ENCODE measurements at regions of chr1 and their contacts with region 1.

Region 1: GRCh38 chr1:160768295-160768657 is 27.7 kb upstream of the LY9 start:
- DNase-seq: peak; percentile 87
- ATAC-seq: peak; percentile 98
- H3K4me3 ChIP-seq: peak overlapping the region in 4 of 5 experiments; percentile 20 to 64 (median 43)
- H3K4me3 Mint-ChIP-seq: peak overlapping the region; percentile 83
- H3K27ac ChIP-seq: peak overlapping the region; percentile 39 to 68
- H3K27ac Mint-ChIP-seq: peak overlapping the region; percentile 85
- H3K4me1 ChIP-seq: peaks cover 11 to 18% of the 10 kb centered on the region in 2 donors
- H3K4me1 Mint-ChIP-seq: peaks cover 29% of the 10 kb centered on the region
- H3K27me3 ChIP-seq: no peaks in the 10 kb centered on the region
- H3K27me3 Mint-ChIP-seq: no peaks in the 10 kb centered on the region
- CTCF ChIP-seq: peak; percentile 74

Region 2: DNA sequence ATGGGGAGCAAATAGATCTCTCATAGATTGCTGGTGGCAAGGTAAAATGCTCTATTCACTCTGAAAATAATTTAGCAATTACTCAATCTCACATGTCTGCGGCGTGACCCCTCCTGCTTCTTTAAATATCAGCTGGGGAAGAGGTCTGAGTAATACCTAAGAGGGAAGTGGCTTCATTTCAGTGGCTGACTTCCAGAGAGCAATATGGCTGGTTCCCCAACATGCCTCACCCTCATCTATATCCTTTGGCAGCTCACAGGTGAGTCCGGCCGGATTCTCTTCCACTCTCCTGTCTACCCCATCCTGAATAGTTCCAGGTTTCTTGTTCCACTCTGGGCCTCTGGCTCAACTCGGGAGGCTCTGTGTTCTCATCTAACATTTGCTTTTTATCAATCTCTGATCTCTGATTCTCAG is 29.2 kb before region 1 on chr1 and contains the start of gene SLAMF7:
- CTCF ChIA-PET with region 1: interaction called, 11 read pairs
- POLR2A ChIA-PET with region 1: no interaction called
- intact Hi-C with region 1: no loop called
- DNase-seq: peak; percentile 75
- ATAC-seq: peak; percentile 92
- H3K4me3 ChIP-seq: peak within 1 kb of the TSS in 4 of 5 experiments; percentile 9 to 50 (median 31)
- H3K4me3 Mint-ChIP-seq: peak within 1 kb of the TSS; percentile 91
- H3K27ac ChIP-seq: peak within 1 kb of the TSS; percentile 41 to 70
- H3K27ac Mint-ChIP-seq: peak within 1 kb of the TSS; percentile 87
- H3K4me1 ChIP-seq: peaks cover 25 to 39% of the 10 kb centered on the region in 2 donors
- H3K4me1 Mint-ChIP-seq: peaks cover 61% of the 10 kb centered on the region
- H3K27me3 ChIP-seq: no peaks in the 10 kb centered on the region
- H3K27me3 Mint-ChIP-seq: no peaks in the 10 kb centered on the region
- CTCF ChIP-seq: no peak
- total RNA-seq, gene SLAMF7: 51.6 and 52.6 TPM in 2 replicates

Region 3: GRCh38 chr1:160795951-160796383 is 27.7 kb after region 1 on chr1 and contains the start of gene LY9:
- CTCF ChIA-PET with region 1: interaction called, 150 read pairs
- POLR2A ChIA-PET with region 1: interaction called, 3 read pairs
- intact Hi-C with region 1: loop called (anchors 2 kb)
- DNase-seq: peak; percentile 96
- ATAC-seq: peak; percentile 93
- H3K4me3 ChIP-seq: peak within 1 kb of the TSS; percentile 41 to 87 (median 63)
- H3K4me3 Mint-ChIP-seq: peak within 1 kb of the TSS; percentile 99
- H3K27ac ChIP-seq: peak within 1 kb of the TSS; percentile 95 to 98
- H3K27ac Mint-ChIP-seq: peak within 1 kb of the TSS; percentile 98
- H3K4me1 ChIP-seq: peaks cover 62 to 68% of the 10 kb centered on the region in 2 donors
- H3K4me1 Mint-ChIP-seq: peaks cover 68% of the 10 kb centered on the region
- H3K27me3 ChIP-seq: no peaks in the 10 kb centered on the region
- H3K27me3 Mint-ChIP-seq: no peaks in the 10 kb centered on the region
- CTCF ChIP-seq: no peak
- total RNA-seq, gene LY9: 365 and 367 TPM in 2 replicates

Region 4: DNA sequence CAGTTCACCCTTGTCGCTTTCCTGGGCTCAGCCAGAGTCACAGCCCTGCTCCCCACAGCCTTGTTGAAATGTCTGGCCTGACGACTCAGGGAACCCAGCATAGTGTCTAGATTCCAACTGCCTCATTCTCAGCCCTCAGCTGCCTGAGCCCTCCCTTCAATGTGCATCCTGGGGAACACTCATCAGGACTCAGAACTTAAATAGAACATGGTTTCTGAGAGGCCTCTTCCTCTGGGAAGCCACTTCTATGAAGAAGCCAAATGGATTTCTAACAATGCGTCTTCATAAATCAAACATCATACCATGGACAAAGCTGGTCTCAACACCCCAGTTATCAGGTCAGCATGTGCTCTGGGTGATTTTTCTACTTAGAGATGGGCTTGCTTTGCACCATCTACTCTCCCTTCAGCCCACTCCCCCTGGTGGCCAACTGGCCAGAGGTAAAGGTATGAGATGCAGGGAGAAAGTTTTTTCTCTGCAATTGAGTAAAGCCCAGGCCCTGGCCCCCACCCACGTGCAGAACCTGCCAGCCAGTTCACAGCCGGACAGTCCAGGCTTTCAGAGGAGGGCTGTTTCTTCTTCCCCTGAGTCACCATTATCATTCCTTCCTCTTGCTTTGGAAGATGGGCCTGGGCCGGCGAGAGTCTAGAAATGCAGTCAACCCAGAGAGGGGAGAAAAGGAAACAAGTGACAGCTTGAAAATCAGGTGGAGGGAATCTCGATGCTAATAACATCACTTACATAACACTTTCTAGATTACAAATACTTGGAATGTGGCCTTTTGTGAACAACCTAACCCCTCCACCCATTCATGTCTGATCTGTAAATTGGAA is 62.3 kb after region 1 on chr1:
- CTCF ChIA-PET with region 1: interaction called, 20 read pairs
- POLR2A ChIA-PET with region 1: no interaction called
- intact Hi-C with region 1: no loop called
- DNase-seq: peak; percentile 84
- ATAC-seq: peak; percentile 74
- H3K4me3 ChIP-seq: no peak overlapping the region
- H3K4me3 Mint-ChIP-seq: no peak overlapping the region
- H3K27ac ChIP-seq: peak overlapping the region in 1 of 2 donors; percentile 14
- H3K27ac Mint-ChIP-seq: peak overlapping the region; percentile 77
- H3K4me1 ChIP-seq: no peaks in the 10 kb centered on the region
- H3K4me1 Mint-ChIP-seq: peaks cover 10% of the 10 kb centered on the region
- H3K27me3 ChIP-seq: no peaks in the 10 kb centered on the region
- H3K27me3 Mint-ChIP-seq: no peaks in the 10 kb centered on the region
- CTCF ChIP-seq: peak; percentile 83

Measured in B cell (primary cell).